PC-9 (cell line): ENCODE measurements at regions of chr12 and their contacts with region 1.

Region 1: DNA sequence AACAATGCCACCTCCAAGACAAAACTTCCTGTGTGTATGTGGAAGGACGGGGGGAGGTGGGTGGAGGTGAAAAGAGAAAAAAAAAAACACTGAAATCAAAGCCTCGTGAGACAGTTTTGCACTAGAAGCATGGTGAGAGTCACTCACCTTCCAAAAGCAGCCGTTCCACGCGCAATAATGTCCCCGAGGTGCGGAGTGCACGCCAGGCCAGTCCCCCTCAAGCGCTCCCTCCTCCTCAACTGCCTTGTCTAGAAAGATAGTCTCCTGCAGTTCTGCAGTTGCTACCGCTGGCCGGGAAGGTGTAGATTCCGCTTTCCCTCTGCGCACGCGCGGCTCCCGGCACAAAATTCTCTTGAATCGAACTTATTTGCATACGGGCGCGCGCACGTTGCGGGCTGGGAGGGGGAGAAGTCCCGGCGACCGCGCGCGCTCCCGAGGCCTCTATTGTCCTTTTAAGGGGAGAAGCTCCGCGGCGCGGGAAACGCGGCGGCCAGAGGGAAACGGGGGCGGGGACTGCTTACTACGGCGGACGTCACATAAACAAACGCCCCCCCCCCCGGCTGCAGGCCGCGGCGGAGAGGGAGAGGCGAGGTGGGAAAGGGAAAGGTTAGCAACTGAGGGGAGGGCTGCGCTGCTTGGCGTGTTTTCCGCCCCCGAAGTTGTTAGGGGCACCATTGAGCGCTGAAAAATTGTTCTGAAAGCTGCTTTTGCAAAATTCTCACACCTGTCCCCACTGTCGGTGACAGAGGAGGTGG is at the start of gene SINHCAF:
- DNase-seq: peak; percentile 97 to 100
- H3K4me3 ChIP-seq: peak within 1 kb of the TSS; percentile 91
- H3K27ac ChIP-seq: peak within 1 kb of the TSS; percentile 84
- H3K4me1 ChIP-seq: peaks cover 25% of the 10 kb centered on the region
- H3K27me3 ChIP-seq: no peaks in the 10 kb centered on the region
- CTCF ChIP-seq: no peak
- total RNA-seq, gene SINHCAF: 146 and 152 TPM in 2 replicates

Region 2: DNA sequence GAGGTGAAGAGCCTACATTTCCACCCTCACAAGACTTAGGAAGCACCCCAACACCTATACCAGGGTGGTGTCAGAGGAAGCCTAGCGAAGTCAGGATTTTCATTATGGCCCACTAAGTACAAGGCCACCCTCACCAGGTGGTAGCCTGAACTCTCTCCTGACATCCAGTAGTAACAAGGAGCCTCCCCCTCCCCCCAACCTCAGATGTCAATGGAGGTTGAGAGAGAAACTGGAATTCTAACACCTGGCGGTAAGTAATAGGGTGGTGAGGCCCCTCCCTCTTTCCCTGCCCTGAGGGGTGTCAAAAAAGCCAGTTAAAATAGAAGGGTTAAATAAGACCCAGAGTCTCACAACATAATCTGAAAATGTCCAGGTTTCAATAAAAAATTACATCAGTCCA is 37.7 kb before region 1 on chr12:
- CTCF ChIA-PET with region 1: no interaction called
- POLR2A ChIA-PET with region 1: interaction called, 10 read pairs
- intact Hi-C with region 1: no loop called
- DNase-seq: no peak
- H3K4me3 ChIP-seq: no peak overlapping the region
- H3K27ac ChIP-seq: no peak overlapping the region
- H3K4me1 ChIP-seq: no peaks in the 10 kb centered on the region
- H3K27me3 ChIP-seq: no peaks in the 10 kb centered on the region
- CTCF ChIP-seq: no peak

Region 3: DNA sequence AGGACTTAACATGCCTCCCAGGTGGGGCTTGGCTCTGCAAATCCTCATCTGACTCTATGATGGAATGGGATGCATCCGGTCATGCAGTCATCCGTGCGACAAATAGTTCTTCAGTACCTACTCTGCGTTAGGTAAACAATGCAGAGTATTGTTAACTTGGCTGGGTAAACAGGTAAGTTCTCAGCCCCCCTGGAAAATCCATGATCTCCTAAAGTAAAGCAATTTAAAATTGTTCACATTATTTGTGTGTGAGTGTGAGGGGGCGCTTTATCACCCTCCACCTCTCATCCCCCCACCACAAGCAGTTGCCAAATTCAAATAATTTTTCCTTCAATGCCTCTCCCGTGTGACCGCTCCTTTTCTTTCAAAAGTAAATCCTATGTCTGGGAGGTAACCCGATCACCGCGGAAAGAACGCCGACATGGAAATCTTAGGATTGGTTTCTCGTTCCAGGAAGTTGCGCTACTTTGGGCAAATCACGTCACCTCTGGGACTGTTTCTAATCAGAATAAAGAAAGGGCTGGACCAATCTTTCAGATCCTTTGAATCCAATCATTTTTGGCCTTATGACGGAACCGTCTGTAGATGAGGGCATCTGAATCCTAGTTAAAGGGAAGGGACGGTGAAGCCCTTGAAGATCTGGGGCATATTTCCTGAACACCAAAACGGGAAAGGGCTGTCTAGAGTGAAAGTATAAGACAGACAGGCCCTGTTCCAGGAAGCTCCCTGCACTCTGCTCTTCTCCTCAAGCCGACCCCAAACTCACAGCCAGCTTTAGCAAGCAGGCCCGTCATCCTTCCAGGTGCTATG is 43.9 kb after region 1 on chr12:
- CTCF ChIA-PET with region 1: no interaction called
- POLR2A ChIA-PET with region 1: interaction called, 15 read pairs
- intact Hi-C with region 1: loop called (anchors 1 kb)
- DNase-seq: peak; percentile 83 to 84
- H3K4me3 ChIP-seq: peak overlapping the region; percentile 49; the same call in 1 of the 2 replicates
- H3K27ac ChIP-seq: peak overlapping the region; percentile 78
- H3K4me1 ChIP-seq: peaks cover 31% of the 10 kb centered on the region
- H3K27me3 ChIP-seq: no peaks in the 10 kb centered on the region
- CTCF ChIP-seq: no peak

Region 4: GRCh38 chr12:31589904-31590641 is 264.0 kb after region 1 on chr12:
- CTCF ChIA-PET with region 1: no interaction called
- POLR2A ChIA-PET with region 1: no interaction called
- intact Hi-C with region 1: loop called (anchors 5 kb)
- DNase-seq: peak; percentile 40 to 64
- H3K4me3 ChIP-seq: peak overlapping the region; percentile 78
- H3K27ac ChIP-seq: no peak overlapping the region
- H3K4me1 ChIP-seq: peaks cover 12% of the 10 kb centered on the region
- H3K27me3 ChIP-seq: no peaks in the 10 kb centered on the region
- CTCF ChIP-seq: no peak

Region 5: DNA sequence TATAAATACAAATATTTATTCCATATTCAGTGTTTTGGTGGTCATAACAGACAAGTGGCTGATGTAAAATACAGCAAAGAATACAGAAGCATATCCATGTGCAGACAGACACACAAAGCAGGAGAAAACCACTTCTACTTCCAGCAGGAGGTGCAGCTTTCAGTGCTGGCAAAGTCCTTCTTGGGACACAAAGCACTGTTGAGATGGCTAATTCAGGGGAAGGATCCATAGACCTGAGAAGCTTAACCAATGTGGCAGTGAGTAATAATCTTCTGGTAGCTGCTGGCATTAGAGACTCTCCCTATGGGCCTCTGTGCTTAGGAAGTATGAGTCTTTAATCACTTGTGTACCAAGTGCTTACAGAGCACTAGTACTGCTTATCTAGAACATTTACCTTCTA is 376.0 kb after region 1 on chr12:
- CTCF ChIA-PET with region 1: no interaction called
- POLR2A ChIA-PET with region 1: no interaction called
- intact Hi-C with region 1: no loop called
- DNase-seq: no peak
- H3K4me3 ChIP-seq: no peak overlapping the region
- H3K27ac ChIP-seq: no peak overlapping the region
- H3K4me1 ChIP-seq: no peaks in the 10 kb centered on the region
- H3K27me3 ChIP-seq: no peaks in the 10 kb centered on the region
- CTCF ChIP-seq: no peak

Region 6: GRCh38 chr12:31728917-31729640 is 403.0 kb after region 1 on chr12 and contains the start of gene AMN1:
- CTCF ChIA-PET with region 1: no interaction called
- POLR2A ChIA-PET with region 1: no interaction called
- intact Hi-C with region 1: no loop called
- DNase-seq: peak; percentile 97 to 100
- H3K4me3 ChIP-seq: peak within 1 kb of the TSS; percentile 80
- H3K27ac ChIP-seq: peak within 1 kb of the TSS; percentile 84
- H3K4me1 ChIP-seq: peaks cover 36% of the 10 kb centered on the region
- H3K27me3 ChIP-seq: no peaks in the 10 kb centered on the region
- CTCF ChIP-seq: no peak
- total RNA-seq, gene AMN1: 6.2 and 7.4 TPM in 2 replicates

Region 7: DNA sequence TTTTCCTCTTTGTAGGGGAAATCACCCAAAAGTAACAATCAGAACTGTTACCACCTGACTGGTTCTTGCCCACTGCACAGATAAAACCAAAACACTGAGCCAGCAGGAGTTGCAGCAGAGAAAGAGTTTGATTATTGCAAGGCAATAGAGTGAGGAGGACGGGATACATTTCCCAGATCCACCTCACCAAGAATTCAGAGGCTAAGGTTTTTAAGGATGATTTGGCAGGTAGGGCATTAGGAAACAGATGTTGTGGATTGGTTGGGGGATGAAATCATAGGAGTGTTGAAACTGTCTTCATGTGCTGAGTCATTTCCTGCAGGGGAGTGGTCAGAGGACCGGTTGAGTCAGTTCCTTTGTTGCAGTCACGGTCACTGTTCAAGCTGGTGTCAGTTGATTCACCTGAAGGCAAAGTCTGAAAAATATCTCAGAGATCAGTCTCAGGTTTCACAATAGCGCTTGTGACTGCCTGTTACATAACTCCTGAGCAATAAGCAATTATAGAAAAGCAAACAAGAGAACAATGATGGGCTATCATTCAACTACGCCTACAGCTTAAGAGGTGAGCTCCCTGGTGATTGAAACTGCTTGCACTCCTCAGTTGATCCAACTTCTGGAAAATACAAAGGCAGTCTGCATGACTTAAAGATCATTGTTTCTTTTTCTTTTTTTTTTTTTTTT is 423.1 kb after region 1 on chr12:
- CTCF ChIA-PET with region 1: no interaction called
- POLR2A ChIA-PET with region 1: interaction called, 33 read pairs
- intact Hi-C with region 1: no loop called
- DNase-seq: peak; percentile 83 to 98
- H3K4me3 ChIP-seq: peak overlapping the region; percentile 5; the same call in 1 of the 2 replicates
- H3K27ac ChIP-seq: peak overlapping the region; percentile 89
- H3K4me1 ChIP-seq: peaks cover 29% of the 10 kb centered on the region
- H3K27me3 ChIP-seq: no peaks in the 10 kb centered on the region
- CTCF ChIP-seq: no peak

Region 8: DNA sequence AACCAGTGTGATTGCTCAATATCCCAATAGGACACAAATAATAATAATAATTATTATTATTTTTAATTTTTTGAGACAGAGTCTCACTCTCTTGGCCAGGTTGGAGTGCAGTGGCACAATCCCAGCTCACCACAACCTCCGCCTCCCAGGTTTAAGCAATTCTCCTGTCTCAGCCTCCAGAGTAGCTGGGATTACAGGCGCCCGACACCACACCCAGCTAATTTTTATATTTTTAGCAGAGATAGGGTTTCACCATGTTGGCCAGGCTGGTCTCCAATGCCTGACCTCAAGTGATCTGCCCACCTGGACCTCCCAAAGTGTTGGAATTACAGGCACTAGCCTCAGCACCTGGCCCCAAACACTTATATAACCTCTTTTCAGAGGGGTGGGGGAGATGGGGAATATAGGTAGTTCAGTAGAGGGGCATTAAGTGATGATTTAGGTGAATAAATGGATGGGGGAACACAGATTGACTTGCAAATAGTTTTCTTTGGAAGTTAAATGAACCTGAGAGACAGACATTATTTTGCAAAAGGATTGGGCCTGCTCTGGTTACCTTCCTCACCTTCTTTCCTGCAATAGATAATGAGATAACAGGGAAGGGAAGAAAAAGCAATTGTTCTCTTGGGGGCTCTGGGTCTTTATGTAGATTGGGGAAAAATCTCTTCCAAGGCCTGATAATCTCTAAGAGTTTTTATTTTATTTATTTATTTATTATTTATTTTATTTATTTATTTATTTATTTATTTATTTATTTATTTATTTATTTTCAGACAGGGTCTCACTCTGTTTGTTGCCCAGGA is 690.8 kb after region 1 on chr12:
- CTCF ChIA-PET with region 1: no interaction called
- POLR2A ChIA-PET with region 1: no interaction called
- intact Hi-C with region 1: no loop called
- DNase-seq: no peak
- H3K4me3 ChIP-seq: no peak overlapping the region
- H3K27ac ChIP-seq: no peak overlapping the region
- H3K4me1 ChIP-seq: no peaks in the 10 kb centered on the region
- H3K27me3 ChIP-seq: no peaks in the 10 kb centered on the region
- CTCF ChIP-seq: no peak